Posterior vena cava (tissue), 2 donors: ENCODE measurements at regions of chr13 and their contacts with region 1.

Region 1: GRCh38 chr13:47250146-47250545 is 353.3 kb upstream of the HTR2A start:
- DNase-seq: no peak

Region 2: GRCh38 chr13:47135800-47136503 is 114.2 kb before region 1 on chr13:
- intact Hi-C with region 1: no loop called
- DNase-seq: no peak

Region 3: DNA sequence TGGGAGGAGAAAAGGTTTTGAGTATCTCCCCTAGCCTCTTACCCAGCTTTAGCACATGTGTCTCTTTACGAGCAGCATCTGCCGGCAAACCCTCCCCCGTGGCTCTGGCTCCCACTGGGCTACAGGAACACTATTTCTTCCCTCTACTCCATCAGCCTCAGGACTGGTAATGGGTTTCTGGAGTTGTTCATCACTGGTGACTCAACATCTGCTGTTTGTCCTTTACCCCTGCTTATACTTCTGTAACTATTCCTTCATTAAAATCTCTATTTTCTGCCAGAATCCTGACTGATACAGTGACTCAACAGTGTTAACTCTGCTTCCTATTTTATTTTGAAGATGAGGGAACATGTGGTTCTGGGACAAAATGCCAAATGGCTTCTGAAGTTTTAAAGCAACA is 84.0 kb after region 1 on chr13:
- intact Hi-C with region 1: loop called in 1 of 2 experiments (anchors 5 kb)
- DNase-seq: peak; percentile 80